ENCODE measurements at regions of chr12 and their contacts with region 1.

Region 1: DNA sequence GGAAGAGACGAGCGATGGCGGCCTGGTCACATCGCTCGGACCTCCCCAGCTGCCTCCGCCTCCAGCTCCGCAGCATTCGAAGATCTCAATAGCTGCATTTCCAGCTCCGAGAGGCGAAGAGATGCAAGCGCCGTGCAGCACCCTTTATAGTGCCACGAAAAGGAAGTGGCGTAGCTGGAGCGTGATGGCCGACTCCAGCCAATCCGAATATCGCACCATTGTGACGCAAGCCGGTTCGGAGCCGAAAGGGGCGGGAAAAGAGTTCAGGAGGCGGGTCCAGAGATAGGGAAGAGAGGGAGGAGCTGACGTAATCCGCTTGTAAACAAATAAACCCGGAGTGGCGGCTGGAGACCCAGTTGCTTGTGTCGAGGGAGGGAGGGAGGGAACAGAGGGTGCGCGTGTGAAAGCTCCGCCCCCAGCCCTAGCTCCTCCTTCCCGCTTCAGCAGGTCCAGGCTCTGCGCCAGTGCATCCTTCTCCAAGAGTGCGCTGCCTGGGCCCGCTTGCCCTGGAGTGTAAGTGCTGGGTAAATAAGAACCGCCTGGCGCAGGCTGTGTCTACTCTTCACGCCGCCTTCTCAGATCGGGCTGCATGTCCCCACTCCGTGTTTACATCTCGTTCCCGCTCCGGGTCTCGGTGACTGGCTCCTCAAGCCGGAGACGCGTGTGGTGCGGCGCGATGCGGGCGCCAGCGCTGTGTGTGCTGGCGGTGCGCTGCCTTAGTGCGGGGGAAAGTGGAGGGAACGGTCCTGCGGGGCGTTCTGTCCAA is at the start of gene BTG1:
- DNase-seq: peak; percentile 95
- ATAC-seq: peak; percentile 77
- H3K4me3 Mint-ChIP-seq: peak within 1 kb of the TSS; percentile 88
- H3K27ac Mint-ChIP-seq: peak within 1 kb of the TSS; percentile 99
- H3K4me1 Mint-ChIP-seq: peaks cover 27% of the 10 kb centered on the region
- H3K27me3 Mint-ChIP-seq: no peaks in the 10 kb centered on the region
- total RNA-seq, gene BTG1: 249 to 255 TPM

Region 2: GRCh38 chr12:91382081-91382543 is 763.8 kb before region 1 on chr12:
- POLR2A ChIA-PET with region 1: interaction called, 21 read pairs
- DNase-seq: peak; percentile 82
- ATAC-seq: peak; percentile 81
- H3K4me3 Mint-ChIP-seq: peak overlapping the region; percentile 89
- H3K27ac Mint-ChIP-seq: peak overlapping the region; percentile 53
- H3K4me1 Mint-ChIP-seq: peaks cover 11% of the 10 kb centered on the region
- H3K27me3 Mint-ChIP-seq: peaks cover 3% of the 10 kb centered on the region

Region 3: GRCh38 chr12:91854725-91855124 is 291.2 kb before region 1 on chr12:
- POLR2A ChIA-PET with region 1: no interaction called
- DNase-seq: no peak
- ATAC-seq: no peak
- H3K4me3 Mint-ChIP-seq: no peak overlapping the region
- H3K27ac Mint-ChIP-seq: no peak overlapping the region
- H3K4me1 Mint-ChIP-seq: peaks cover 10% of the 10 kb centered on the region
- H3K27me3 Mint-ChIP-seq: no peaks in the 10 kb centered on the region

Region 4: GRCh38 chr12:91958816-91959215 is 187.1 kb before region 1 on chr12:
- POLR2A ChIA-PET with region 1: no interaction called
- DNase-seq: no peak
- ATAC-seq: no peak
- H3K4me3 Mint-ChIP-seq: no peak overlapping the region
- H3K27ac Mint-ChIP-seq: no peak overlapping the region
- H3K4me1 Mint-ChIP-seq: peaks cover 3% of the 10 kb centered on the region
- H3K27me3 Mint-ChIP-seq: no peaks in the 10 kb centered on the region

Region 5: GRCh38 chr12:92021665-92022033 is 124.3 kb before region 1 on chr12:
- POLR2A ChIA-PET with region 1: no interaction called
- DNase-seq: no peak
- ATAC-seq: no peak
- H3K4me3 Mint-ChIP-seq: no peak overlapping the region
- H3K27ac Mint-ChIP-seq: no peak overlapping the region
- H3K4me1 Mint-ChIP-seq: peaks cover 13% of the 10 kb centered on the region
- H3K27me3 Mint-ChIP-seq: no peaks in the 10 kb centered on the region

Region 6: GRCh38 chr12:92041742-92042141 is 104.2 kb before region 1 on chr12:
- POLR2A ChIA-PET with region 1: interaction called, 12 read pairs
- DNase-seq: no peak
- ATAC-seq: peak; percentile 87
- H3K4me3 Mint-ChIP-seq: peak overlapping the region; percentile 31
- H3K27ac Mint-ChIP-seq: peak overlapping the region; percentile 70
- H3K4me1 Mint-ChIP-seq: peaks cover 40% of the 10 kb centered on the region
- H3K27me3 Mint-ChIP-seq: no peaks in the 10 kb centered on the region

Region 7: DNA sequence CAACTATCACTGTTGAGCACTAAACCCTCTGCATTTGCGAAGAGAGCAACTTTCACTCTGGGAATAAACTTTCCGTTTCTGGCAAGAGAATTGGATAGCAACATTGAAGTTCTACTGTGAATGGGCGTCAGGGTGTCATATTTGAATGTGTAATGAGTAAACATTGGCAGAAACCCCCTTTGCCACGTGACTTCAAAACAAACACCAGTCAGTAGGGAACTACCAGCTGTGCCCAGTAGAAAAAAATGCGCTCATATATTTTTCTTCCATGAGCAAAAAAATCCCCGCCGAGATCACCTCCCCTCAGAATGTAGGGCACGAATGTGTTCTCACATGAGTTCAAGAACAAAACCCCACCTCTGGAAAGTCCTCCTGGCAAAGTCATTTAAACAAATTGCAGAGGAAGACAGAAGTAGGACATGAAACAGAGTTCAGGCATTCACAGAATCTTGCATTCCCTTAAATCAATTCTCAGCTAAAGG is 80.9 kb before region 1 on chr12:
- POLR2A ChIA-PET with region 1: no interaction called
- DNase-seq: no peak
- ATAC-seq: no peak
- H3K4me3 Mint-ChIP-seq: no peak overlapping the region
- H3K27ac Mint-ChIP-seq: no peak overlapping the region
- H3K4me1 Mint-ChIP-seq: peaks cover 8% of the 10 kb centered on the region
- H3K27me3 Mint-ChIP-seq: no peaks in the 10 kb centered on the region

Region 8: DNA sequence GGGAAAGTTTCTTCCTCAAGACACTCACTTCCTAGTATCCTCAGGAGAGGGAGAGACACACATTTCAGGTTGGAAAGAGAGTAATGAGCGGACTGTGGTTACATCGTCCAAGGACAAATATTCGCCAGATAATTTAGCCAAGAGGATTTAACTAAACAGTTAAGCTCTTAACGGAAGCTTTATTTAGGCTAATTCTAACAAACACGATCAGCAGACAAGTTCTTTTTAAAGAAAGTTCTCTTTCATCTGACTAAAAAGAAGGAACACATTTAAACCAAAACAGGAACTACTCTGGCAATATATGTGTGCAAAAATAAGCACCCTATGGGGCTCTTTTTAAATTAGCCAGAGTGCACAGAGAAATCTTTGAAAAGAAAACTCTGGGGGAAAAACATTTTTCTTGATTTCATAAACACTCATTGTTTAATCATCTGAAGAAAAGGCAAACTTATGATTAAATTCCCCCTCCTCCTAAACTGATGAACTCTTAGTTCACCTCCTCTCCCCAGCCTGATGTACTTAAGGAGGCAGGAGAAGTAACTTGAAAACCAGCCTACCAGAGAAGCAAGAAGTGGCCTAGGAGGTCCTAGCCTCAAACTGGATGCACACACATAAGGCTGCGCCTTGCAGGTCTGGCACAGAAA is 13.0 kb after region 1 on chr12:
- POLR2A ChIA-PET with region 1: interaction called, 26 read pairs
- DNase-seq: no peak
- ATAC-seq: no peak
- H3K4me3 Mint-ChIP-seq: peak overlapping the region; percentile 57
- H3K27ac Mint-ChIP-seq: peak overlapping the region; percentile 59
- H3K4me1 Mint-ChIP-seq: peaks cover 39% of the 10 kb centered on the region
- H3K27me3 Mint-ChIP-seq: no peaks in the 10 kb centered on the region

Region 9: DNA sequence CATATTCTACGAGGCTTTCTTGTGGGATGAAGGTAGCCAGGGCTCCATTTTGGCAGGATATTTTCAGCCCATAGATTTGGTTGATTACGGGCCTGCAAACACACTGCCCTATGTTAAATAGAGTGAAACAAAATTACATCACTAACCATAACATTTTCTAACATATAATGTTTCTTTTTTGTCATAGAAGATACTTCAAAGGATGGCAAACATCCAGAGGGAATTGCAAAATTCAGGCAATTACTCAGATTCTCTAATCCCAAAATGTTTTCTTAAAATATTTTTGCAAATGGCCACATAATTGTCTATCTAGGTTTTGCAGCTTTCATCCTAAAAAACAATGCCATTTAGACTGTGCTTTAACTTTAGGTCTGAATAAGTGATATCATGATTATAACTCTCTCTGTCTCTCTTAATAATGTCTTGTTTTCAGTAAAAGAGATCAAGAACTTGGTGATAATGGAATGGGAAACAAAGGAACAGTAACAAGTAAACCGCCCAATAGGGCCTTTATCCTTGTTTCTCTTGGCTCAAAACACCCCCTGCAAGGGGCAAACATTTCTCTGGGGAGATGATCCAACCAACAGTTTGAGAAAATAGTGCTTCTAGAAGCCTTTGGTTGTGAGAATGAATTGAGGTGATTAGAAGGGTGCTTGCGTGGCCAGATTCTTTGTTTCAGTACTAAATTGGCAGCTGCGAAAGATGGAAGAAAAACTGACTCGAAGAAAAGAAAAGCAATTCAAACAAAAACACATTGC is 54.1 kb after region 1 on chr12:
- POLR2A ChIA-PET with region 1: interaction called, 148 read pairs
- DNase-seq: no peak
- ATAC-seq: no peak
- H3K4me3 Mint-ChIP-seq: no peak overlapping the region
- H3K27ac Mint-ChIP-seq: no peak overlapping the region
- H3K4me1 Mint-ChIP-seq: no peaks in the 10 kb centered on the region
- H3K27me3 Mint-ChIP-seq: no peaks in the 10 kb centered on the region

Region 10: GRCh38 chr12:92398565-92399309 is 252.8 kb after region 1 on chr12:
- POLR2A ChIA-PET with region 1: interaction called, 248 read pairs
- DNase-seq: no peak
- ATAC-seq: peak; percentile 90
- H3K4me3 Mint-ChIP-seq: peak overlapping the region; percentile 62
- H3K27ac Mint-ChIP-seq: peak overlapping the region; percentile 86
- H3K4me1 Mint-ChIP-seq: peaks cover 73% of the 10 kb centered on the region
- H3K27me3 Mint-ChIP-seq: no peaks in the 10 kb centered on the region

Measured in activated naive CD8-positive, alpha-beta T cell treated with anti-CD3 and anti-CD28 coated beads, Interleukin-2, amount 10 ng/mL, durations not matched to agents 7 days and 5 days (primary cell).